Caco-2 (cell line): ENCODE measurements at regions of chr10 and their contacts with region 1.

Region 1: GRCh38 chr10:79195091-79195923 is 126.5 kb downstream of the ZMIZ1 start:
- DNase-seq: peak; percentile 82 to 89
- H3K4me3 ChIP-seq: no peak overlapping the region
- H3K4me3 Mint-ChIP-seq: no peak overlapping the region
- H3K27ac Mint-ChIP-seq: peak overlapping the region; percentile 54
- H3K4me1 ChIP-seq: peaks cover 6% of the 10 kb centered on the region
- H3K4me1 Mint-ChIP-seq: peaks cover 6% of the 10 kb centered on the region
- H3K27me3 ChIP-seq: no peaks in the 10 kb centered on the region
- H3K27me3 Mint-ChIP-seq: no peaks in the 10 kb centered on the region
- CTCF ChIP-seq: peak; percentile 94 to 96

Region 2: DNA sequence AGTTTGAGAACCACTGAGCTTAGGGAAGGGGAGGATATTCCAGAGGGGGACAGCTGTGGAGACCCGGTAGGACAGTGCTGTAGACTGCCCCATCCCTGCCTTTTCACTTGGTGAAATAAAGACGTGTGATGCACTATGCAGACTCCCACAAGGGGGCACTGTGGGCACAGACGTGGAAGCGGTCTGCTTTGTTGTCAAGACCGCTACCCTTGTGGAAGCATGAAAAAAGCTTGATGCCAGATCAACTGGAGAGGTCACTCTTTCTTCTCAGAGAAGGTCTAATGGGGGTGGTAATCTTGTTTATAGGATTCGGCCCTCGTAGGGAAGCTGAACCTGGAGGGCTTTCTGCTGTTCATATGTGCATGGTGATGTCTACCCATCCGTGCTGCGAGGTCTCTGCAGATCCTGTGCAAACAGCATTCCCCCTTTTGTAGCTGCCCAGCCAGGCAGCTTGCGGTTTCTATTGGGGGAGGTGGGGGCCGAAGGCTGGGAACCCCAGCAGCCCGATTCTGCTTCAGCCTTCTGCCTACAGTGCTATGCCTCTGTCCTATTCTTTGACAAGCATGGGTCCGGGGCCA is 1147.9 kb before region 1 on chr10:
- CTCF ChIA-PET with region 1: interaction called, 6 read pairs
- POLR2A ChIA-PET with region 1: no interaction called
- intact Hi-C with region 1: loop called (anchors 1 kb)
- DNase-seq: peak; percentile 83 to 92
- H3K4me3 ChIP-seq: no peak overlapping the region
- H3K4me3 Mint-ChIP-seq: no peak overlapping the region
- H3K27ac Mint-ChIP-seq: no peak overlapping the region
- H3K4me1 ChIP-seq: no peaks in the 10 kb centered on the region
- H3K4me1 Mint-ChIP-seq: no peaks in the 10 kb centered on the region
- H3K27me3 ChIP-seq: no peaks in the 10 kb centered on the region
- H3K27me3 Mint-ChIP-seq: no peaks in the 10 kb centered on the region
- CTCF ChIP-seq: peak; percentile 91 to 94

Region 3: DNA sequence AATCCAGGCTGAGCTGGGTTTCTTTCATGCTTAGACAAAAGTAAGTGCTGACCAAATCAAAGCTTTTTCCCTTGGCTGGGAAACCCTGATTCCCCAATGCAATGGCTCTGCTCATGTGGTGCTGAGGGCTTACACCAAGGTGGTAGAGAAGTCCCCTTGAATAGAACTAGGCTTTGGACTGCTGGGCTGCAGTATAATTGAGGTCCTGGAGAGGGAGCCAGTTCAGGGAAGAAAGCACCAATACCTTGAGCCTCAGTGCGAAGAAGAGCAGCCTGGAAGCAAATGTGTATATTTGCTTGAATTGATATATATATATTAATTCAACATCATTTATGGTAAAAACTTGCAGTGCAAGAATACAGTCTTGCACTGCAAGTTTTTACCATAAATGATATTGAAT is 770.6 kb before region 1 on chr10:
- CTCF ChIA-PET with region 1: no interaction called
- POLR2A ChIA-PET with region 1: no interaction called
- intact Hi-C with region 1: loop called (anchors 10 kb)
- DNase-seq: peak in 1 of 2 experiments; percentile 53
- H3K4me3 ChIP-seq: no peak overlapping the region
- H3K4me3 Mint-ChIP-seq: no peak overlapping the region
- H3K27ac Mint-ChIP-seq: no peak overlapping the region
- H3K4me1 ChIP-seq: no peaks in the 10 kb centered on the region
- H3K4me1 Mint-ChIP-seq: no peaks in the 10 kb centered on the region
- H3K27me3 ChIP-seq: no peaks in the 10 kb centered on the region
- H3K27me3 Mint-ChIP-seq: no peaks in the 10 kb centered on the region
- CTCF ChIP-seq: peak; percentile 47 to 68

Region 4: DNA sequence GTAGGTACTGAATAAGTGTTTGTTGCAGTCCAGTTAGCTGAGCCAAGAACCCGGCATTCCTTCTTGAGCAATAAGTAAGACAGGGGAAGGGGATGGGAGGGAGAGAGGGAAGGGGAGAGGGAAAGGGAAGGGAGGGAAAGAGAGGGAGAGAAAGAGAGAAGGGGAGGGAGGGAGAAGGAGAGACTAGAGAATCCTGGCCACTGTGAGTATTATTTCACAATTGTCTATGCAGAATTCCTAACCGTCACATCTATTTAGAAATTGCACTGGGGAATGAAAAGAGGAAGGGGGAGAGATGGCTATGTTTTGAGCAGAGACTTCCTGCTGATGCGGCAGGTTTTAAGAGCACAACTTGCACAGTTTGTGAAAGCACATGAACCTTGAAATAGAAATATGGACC is 377.9 kb before region 1 on chr10:
- CTCF ChIA-PET with region 1: no interaction called
- POLR2A ChIA-PET with region 1: no interaction called
- intact Hi-C with region 1: no loop called
- DNase-seq: no peak
- H3K4me3 ChIP-seq: no peak overlapping the region
- H3K4me3 Mint-ChIP-seq: no peak overlapping the region
- H3K27ac Mint-ChIP-seq: no peak overlapping the region
- H3K4me1 ChIP-seq: no peaks in the 10 kb centered on the region
- H3K4me1 Mint-ChIP-seq: peaks cover 6% of the 10 kb centered on the region
- H3K27me3 ChIP-seq: no peaks in the 10 kb centered on the region
- H3K27me3 Mint-ChIP-seq: no peaks in the 10 kb centered on the region
- CTCF ChIP-seq: no peak

Region 5: GRCh38 chr10:78925800-78926319 is 269.4 kb before region 1 on chr10:
- CTCF ChIA-PET with region 1: interaction called, 3 read pairs
- POLR2A ChIA-PET with region 1: no interaction called
- intact Hi-C with region 1: loop called (anchors 10 kb)
- DNase-seq: no peak
- H3K4me3 ChIP-seq: no peak overlapping the region
- H3K4me3 Mint-ChIP-seq: no peak overlapping the region
- H3K27ac Mint-ChIP-seq: no peak overlapping the region
- H3K4me1 ChIP-seq: no peaks in the 10 kb centered on the region
- H3K4me1 Mint-ChIP-seq: peaks cover 11% of the 10 kb centered on the region
- H3K27me3 ChIP-seq: no peaks in the 10 kb centered on the region
- H3K27me3 Mint-ChIP-seq: no peaks in the 10 kb centered on the region
- CTCF ChIP-seq: no peak

Region 6: GRCh38 chr10:78972947-78973900 is 222.1 kb before region 1 on chr10:
- CTCF ChIA-PET with region 1: interaction called, 6 read pairs
- POLR2A ChIA-PET with region 1: no interaction called
- intact Hi-C with region 1: loop called (anchors 2 kb)
- DNase-seq: peak; percentile 83 to 86
- H3K4me3 ChIP-seq: peak overlapping the region; percentile 44
- H3K4me3 Mint-ChIP-seq: peak overlapping the region; percentile 84
- H3K27ac Mint-ChIP-seq: peak overlapping the region; percentile 89
- H3K4me1 ChIP-seq: peaks cover 23% of the 10 kb centered on the region
- H3K4me1 Mint-ChIP-seq: peaks cover 16% of the 10 kb centered on the region
- H3K27me3 ChIP-seq: no peaks in the 10 kb centered on the region
- H3K27me3 Mint-ChIP-seq: no peaks in the 10 kb centered on the region
- CTCF ChIP-seq: no peak

Region 7: GRCh38 chr10:79127151-79127961 is 68.0 kb before region 1 on chr10:
- CTCF ChIA-PET with region 1: interaction called, 11 read pairs
- POLR2A ChIA-PET with region 1: no interaction called
- intact Hi-C with region 1: loop called (anchors 1 kb)
- DNase-seq: peak; percentile 91 to 94
- H3K4me3 ChIP-seq: no peak overlapping the region
- H3K4me3 Mint-ChIP-seq: no peak overlapping the region
- H3K27ac Mint-ChIP-seq: peak overlapping the region; percentile 48
- H3K4me1 ChIP-seq: peaks cover 31% of the 10 kb centered on the region
- H3K4me1 Mint-ChIP-seq: peaks cover 14% of the 10 kb centered on the region
- H3K27me3 ChIP-seq: no peaks in the 10 kb centered on the region
- H3K27me3 Mint-ChIP-seq: no peaks in the 10 kb centered on the region
- CTCF ChIP-seq: peak in 1 of 2 experiments; percentile 23

Region 8: GRCh38 chr10:79155301-79156081 is 39.8 kb before region 1 on chr10:
- CTCF ChIA-PET with region 1: interaction called, 18 read pairs
- POLR2A ChIA-PET with region 1: no interaction called
- intact Hi-C with region 1: loop called (anchors 2 kb)
- DNase-seq: no peak
- H3K4me3 ChIP-seq: no peak overlapping the region
- H3K4me3 Mint-ChIP-seq: no peak overlapping the region
- H3K27ac Mint-ChIP-seq: peak overlapping the region; percentile 96
- H3K4me1 ChIP-seq: peaks cover 56% of the 10 kb centered on the region
- H3K4me1 Mint-ChIP-seq: peaks cover 31% of the 10 kb centered on the region
- H3K27me3 ChIP-seq: no peaks in the 10 kb centered on the region
- H3K27me3 Mint-ChIP-seq: no peaks in the 10 kb centered on the region
- CTCF ChIP-seq: peak in 1 of 2 experiments; percentile 11

Region 9: DNA sequence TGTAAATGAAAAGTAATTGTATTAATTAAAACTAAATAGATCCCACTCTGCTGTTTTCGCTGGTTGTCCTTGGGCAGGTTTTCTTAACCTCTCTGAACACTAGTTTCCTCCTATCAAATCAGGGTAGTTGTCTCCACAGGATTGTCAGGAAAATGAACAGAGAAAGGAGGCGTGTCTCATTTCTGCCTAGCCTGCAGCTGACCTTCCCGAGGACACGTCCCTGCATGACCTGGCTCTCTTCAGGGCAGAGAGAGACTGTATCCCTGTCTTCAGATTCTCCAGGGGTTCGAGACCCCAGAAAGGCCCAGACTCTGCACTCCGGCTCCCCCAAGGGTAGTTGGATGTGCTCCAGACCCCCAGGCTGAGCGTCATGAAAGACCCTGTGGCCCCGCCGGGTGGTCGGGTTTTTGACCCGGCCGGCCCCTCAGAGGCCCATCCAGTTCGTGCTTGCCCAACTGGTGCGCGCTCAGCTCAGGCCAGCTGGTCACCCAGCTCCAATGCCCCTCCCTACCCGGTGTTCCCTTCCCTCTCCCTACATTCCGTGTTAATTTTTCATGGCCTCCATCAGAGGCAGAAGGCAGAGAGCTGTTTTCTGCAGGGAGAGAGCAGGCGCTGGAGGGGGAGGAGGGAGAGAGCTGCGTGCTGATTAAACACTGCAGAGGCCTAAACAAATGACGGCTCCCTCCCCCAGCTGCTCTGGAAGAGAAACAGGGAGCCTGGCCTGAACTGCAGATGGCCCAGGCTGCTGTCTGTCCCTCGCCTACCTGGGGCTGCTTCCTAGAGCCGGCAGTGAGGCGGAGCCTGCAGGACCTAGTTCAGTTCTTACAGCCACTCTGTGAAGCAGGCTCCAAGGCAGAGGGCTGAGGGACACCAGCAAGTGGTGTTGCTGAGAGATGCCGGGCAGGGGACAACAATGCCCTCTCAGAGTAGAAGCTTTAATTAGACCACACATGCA is 65.8 kb after region 1 on chr10:
- CTCF ChIA-PET with region 1: no interaction called
- POLR2A ChIA-PET with region 1: no interaction called
- intact Hi-C with region 1: no loop called
- DNase-seq: peak; percentile 47 to 49
- H3K4me3 ChIP-seq: no peak overlapping the region
- H3K4me3 Mint-ChIP-seq: no peak overlapping the region
- H3K27ac Mint-ChIP-seq: no peak overlapping the region
- H3K4me1 ChIP-seq: peaks cover 21% of the 10 kb centered on the region
- H3K4me1 Mint-ChIP-seq: peaks cover 8% of the 10 kb centered on the region
- H3K27me3 ChIP-seq: no peaks in the 10 kb centered on the region
- H3K27me3 Mint-ChIP-seq: no peaks in the 10 kb centered on the region
- CTCF ChIP-seq: no peak